ENCODE measurements at regions of chr6 and their contacts with region 1.

Region 1: GRCh38 chr6:112799889-112800288 is 452.8 kb downstream of the RFPL4B start:
- DNase-seq: no peak
- H3K4me3 ChIP-seq: no peak overlapping the region
- H3K27ac ChIP-seq: no peak overlapping the region
- H3K4me1 ChIP-seq: no peaks in the 10 kb centered on the region
- H3K27me3 ChIP-seq: no peaks in the 10 kb centered on the region
- CTCF ChIP-seq: no peak
- POLR2A ChIP-seq: no peak

Region 2: DNA sequence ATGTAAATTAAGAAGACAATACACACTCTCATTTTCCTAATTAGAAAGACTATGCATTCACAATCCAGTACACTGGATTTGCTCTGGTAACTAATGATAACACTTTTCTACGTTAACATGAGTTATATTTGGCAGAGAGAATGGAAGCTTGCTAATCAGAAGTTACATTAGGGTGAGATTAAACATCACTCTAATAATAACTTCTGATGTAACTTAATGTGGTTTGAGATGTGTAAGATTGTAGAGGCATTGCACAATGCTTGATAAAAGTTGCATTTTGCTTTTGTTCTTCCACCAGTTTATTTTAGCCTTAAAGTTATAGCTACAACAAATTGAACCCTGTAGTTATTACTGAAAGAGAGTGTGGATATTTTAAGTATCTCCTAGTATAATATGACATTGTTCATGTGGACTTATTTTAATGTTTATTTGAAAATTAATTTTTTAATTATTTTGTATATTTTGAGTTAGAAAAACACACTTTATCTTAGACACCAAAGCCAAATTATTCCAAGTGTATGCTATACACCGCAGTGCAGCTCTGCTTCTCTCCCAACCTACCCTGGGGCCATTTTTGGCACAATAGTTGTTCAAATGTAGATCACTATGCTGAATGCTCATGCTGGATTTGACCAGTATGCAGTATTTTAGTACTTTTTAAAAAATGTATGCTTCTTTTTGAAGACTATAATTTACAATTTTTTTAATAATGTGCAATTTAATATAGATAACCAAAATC is 1569.4 kb before region 1 on chr6:
- intact Hi-C with region 1: no loop called
- DNase-seq: no peak
- H3K4me3 ChIP-seq: no peak overlapping the region
- H3K27ac ChIP-seq: no peak overlapping the region
- H3K4me1 ChIP-seq: no peaks in the 10 kb centered on the region
- H3K27me3 ChIP-seq: no peaks in the 10 kb centered on the region
- CTCF ChIP-seq: no peak
- POLR2A ChIP-seq: no peak

Region 3: DNA sequence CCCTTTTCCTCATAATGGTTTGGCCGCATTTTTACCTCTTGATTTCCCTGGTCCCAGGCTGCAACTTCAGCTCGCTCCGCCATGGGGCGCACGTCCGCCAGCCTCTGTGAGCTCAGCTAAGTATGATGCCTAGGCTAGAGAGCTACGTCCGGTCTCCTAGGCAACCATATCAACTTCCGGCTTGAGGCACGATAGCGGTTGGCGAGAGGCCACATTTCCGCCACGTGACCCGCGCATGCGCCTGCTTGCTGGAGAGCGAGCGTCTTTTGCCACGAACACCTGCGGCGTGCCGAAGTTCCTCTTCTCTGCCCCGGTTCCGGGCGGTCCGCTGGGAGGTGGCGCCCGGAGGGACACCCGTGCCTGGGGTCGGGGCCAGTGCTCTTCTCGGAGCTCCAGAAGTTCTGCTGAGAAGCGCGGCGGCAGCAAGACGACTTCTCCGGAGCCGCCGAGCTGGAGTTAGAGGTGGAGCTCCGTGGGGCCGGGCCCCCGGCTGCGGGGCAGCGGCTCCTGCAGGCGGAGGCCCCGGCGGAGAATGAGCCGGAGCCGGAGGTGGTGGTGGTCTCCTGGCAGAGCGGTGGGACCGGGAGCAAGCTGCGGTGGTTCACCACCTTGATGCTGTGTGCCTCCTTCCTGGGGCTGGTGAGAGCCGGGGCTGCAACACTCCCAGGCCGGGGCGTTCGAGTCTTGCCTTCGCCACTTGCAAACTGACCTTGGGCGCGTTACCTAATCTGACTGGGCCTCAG is 1540.6 kb before region 1 on chr6:
- intact Hi-C with region 1: no loop called
- DNase-seq: peak; percentile 98 to 99
- H3K4me3 ChIP-seq: peak overlapping the region; percentile 69 to 80 (median 79)
- H3K27ac ChIP-seq: peak overlapping the region; percentile 90
- H3K4me1 ChIP-seq: no peaks in the 10 kb centered on the region
- H3K27me3 ChIP-seq: no peaks in the 10 kb centered on the region
- CTCF ChIP-seq: peak; percentile 98 to 99 (median 99)
- POLR2A ChIP-seq: peak; percentile 41

Region 4: GRCh38 chr6:113082745-113083144 is 282.9 kb after region 1 on chr6:
- intact Hi-C with region 1: loop called (anchors 5 kb)
- DNase-seq: no peak
- H3K4me3 ChIP-seq: no peak overlapping the region
- H3K27ac ChIP-seq: no peak overlapping the region
- H3K4me1 ChIP-seq: no peaks in the 10 kb centered on the region
- H3K27me3 ChIP-seq: no peaks in the 10 kb centered on the region
- CTCF ChIP-seq: no peak
- POLR2A ChIP-seq: no peak